CD4-positive, alpha-beta T cell (primary cell): ENCODE measurements at regions of chr2 and their contacts with region 1.

Region 1: DNA sequence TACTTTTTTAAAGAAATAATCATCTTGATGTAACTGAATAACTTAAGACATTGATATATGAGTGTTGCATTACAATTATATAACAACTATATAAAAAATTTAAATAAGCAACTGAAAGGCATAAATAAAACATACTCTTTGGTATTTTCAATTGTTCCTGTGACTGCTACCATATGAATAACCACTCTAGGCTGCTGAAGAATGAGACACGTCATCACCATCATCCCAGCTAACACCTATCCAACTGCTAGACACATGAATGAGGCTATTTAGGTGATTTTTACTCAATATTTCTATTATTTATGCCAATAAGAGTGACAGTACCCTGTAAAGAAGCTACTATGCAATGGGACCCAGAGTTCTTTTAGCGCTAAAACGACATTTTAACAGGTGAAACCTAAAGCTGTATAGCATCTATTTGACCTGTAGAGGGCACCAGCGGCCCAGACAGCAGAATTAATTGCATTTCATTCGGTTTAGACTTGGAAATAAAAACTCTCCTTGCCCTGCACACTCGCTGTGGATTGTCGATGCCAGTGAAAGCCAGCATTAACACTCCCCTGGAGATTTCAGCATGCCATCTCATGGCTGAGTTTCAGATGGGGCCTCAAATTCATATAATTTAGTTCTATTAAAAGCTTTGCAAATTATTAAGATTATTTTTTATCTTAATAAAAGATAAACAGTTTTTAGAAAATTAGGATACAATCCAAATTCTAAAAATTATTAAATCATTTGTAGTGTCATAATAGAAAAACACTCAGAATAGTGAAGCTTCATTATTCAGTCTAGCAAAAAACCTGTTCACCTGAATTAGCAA is 89.4 kb upstream of the MAP2 start:
- DNase-seq: peak in 3 of 14 experiments; percentile 4 to 34 (median 26)
- ATAC-seq: no peak
- H3K4me3 ChIP-seq: no peak overlapping the region
- H3K4me3 Mint-ChIP-seq: no peak overlapping the region
- H3K27ac ChIP-seq: no peak overlapping the region
- H3K27ac Mint-ChIP-seq: no peak overlapping the region
- H3K4me1 ChIP-seq: no peaks in the 10 kb centered on the region
- H3K4me1 Mint-ChIP-seq: no peaks in the 10 kb centered on the region
- H3K27me3 ChIP-seq: no peaks in the 10 kb centered on the region
- H3K27me3 Mint-ChIP-seq: no peaks in the 10 kb centered on the region
- CTCF ChIP-seq: peak; percentile 60

Region 2: DNA sequence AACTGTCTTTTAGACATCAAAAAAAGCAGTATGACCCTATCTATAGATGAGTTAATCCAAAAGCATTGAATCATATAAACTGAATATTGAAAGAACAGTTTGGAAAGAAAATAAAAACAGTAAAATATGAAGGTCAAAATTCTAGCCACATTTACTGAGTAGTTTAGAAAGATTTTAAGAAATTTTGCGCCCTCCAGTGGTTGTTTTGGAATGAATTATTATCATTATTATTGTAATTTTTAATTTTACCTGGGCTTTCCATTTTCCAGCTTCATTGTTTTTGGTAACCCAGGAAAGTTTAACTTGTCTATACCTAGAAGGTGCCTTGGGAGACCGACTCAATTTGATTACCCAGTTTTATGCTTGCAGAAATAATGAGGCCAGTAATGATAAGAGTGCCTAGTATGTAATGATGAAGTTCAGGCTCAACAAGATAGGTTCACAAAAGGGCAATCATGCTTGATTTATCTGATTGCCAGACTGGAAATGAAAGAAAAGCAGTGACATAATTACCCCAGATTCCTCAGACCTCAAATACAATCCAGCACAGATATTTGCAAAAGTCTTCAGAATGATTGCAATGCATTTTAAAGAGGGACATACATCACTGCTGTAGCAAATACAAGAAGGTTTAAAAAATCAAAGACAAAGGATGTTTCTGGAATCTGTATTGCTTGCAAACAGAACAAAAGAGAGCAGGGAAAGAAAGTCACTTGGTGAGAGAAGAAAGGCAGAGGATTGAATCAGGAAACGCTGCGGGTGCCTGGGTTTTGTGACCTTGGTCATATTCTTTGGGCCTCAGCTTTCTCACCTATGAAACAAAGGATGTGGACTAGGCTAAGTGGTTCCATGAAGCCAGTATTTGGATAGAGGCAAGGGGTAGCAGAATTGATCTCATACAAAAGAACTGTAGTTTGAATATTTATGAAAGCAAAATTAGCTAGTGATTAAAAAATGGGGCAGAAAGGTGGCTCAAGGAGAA is 243.3 kb after region 1 on chr2:
- CTCF ChIA-PET with region 1: no interaction called
- POLR2A ChIA-PET with region 1: no interaction called
- intact Hi-C with region 1: loop called in 1 of 2 experiments (anchors 10 kb)
- DNase-seq: peak in 1 of 14 experiments; percentile 1
- ATAC-seq: no peak
- H3K4me3 ChIP-seq: no peak overlapping the region
- H3K4me3 Mint-ChIP-seq: no peak overlapping the region
- H3K27ac ChIP-seq: no peak overlapping the region
- H3K27ac Mint-ChIP-seq: no peak overlapping the region
- H3K4me1 ChIP-seq: no peaks in the 10 kb centered on the region
- H3K4me1 Mint-ChIP-seq: peaks cover 5% of the 10 kb centered on the region
- H3K27me3 ChIP-seq: no peaks in the 10 kb centered on the region
- H3K27me3 Mint-ChIP-seq: peaks cover 6% of the 10 kb centered on the region
- CTCF ChIP-seq: no peak